Ovary (tissue), 10 donors: ENCODE measurements at regions of chr9 and their contacts with region 1.

Region 1: GRCh38 chr9:115373000-115373709 is 255.2 kb upstream of the TNC start:
- DNase-seq: no peak
- H3K4me3 ChIP-seq: no peak overlapping the region
- H3K27ac ChIP-seq: no peak overlapping the region
- H3K4me1 ChIP-seq: no peaks in the 10 kb centered on the region
- H3K27me3 ChIP-seq: no peaks in the 10 kb centered on the region
- CTCF ChIP-seq: no peak
- EP300 ChIP-seq: no peak
- POLR2A ChIP-seq: no peak

Region 2: GRCh38 chr9:115439641-115440040 is 66.5 kb after region 1 on chr9:
- intact Hi-C with region 1: no loop called
- DNase-seq: no peak
- H3K4me3 ChIP-seq: no peak overlapping the region
- H3K27ac ChIP-seq: no peak overlapping the region
- H3K4me1 ChIP-seq: no peaks in the 10 kb centered on the region
- H3K27me3 ChIP-seq: no peaks in the 10 kb centered on the region
- CTCF ChIP-seq: no peak
- EP300 ChIP-seq: no peak
- POLR2A ChIP-seq: no peak

Region 3: GRCh38 chr9:116288658-116289057 is 915.5 kb after region 1 on chr9:
- intact Hi-C with region 1: loop called in 1 of 4 experiments (anchors 5 kb)
- DNase-seq: no peak
- H3K4me3 ChIP-seq: no peak overlapping the region
- H3K27ac ChIP-seq: no peak overlapping the region
- H3K4me1 ChIP-seq: no peaks in the 10 kb centered on the region
- H3K27me3 ChIP-seq: no peaks in the 10 kb centered on the region
- CTCF ChIP-seq: no peak
- EP300 ChIP-seq: no peak
- POLR2A ChIP-seq: no peak